ENCODE measurements at regions of chr10 and their contacts with region 1.

Region 1: DNA sequence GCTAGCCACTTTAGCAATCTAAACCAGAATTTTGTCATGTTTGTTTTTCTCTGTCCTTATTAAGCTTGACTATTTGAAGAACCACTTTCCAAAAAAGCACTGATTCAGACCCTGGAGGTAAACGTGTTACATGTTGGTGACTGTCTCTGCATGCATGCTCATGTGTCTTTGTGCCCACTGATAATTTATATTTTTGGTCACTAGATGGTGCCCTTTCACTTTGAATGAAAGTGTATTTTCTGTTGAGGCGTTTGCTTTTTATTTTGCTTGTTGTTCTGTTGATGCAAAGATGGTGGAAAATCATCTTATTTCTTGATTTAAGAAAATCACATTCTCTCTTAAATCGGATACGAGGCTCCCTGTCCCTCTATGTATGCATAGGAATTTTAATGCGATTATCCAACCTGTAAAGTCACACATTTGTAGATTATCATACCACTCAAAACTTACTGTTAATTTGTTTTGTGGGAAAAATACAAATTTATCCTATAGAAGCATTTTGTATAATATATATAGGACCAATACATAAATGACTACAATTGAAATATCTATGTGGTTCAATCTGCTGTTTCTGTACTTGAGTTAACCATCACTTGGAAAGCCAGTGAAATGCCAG is 269.3 kb downstream of the BICC1 start:
- DNase-seq: peak; percentile 49
- ATAC-seq: peak; percentile 48; the same call in 1 of the 2 replicates
- H3K4me3 ChIP-seq: no peak overlapping the region
- H3K27ac ChIP-seq: no peak overlapping the region
- H3K4me1 ChIP-seq: peaks cover 8% of the 10 kb centered on the region
- H3K27me3 ChIP-seq: no peaks in the 10 kb centered on the region
- CTCF ChIP-seq: peak; percentile 65
- POLR2A ChIP-seq: no peak
- RAD21 ChIP-seq: peak; percentile 73

Region 2: GRCh38 chr10:58851606-58852005 is 69.6 kb after region 1 on chr10:
- CTCF ChIA-PET with region 1: no interaction called
- POLR2A ChIA-PET with region 1: no interaction called
- dilution Hi-C with region 1: no loop called
- in situ Hi-C with region 1: no loop called
- intact Hi-C with region 1: no loop called
- DNase-seq: peak; percentile 19
- ATAC-seq: no peak
- H3K4me3 ChIP-seq: no peak overlapping the region
- H3K27ac ChIP-seq: no peak overlapping the region
- H3K4me1 ChIP-seq: peaks cover 2% of the 10 kb centered on the region; the same call in 1 of the 2 replicates
- H3K27me3 ChIP-seq: no peaks in the 10 kb centered on the region
- CTCF ChIP-seq: no peak
- POLR2A ChIP-seq: no peak
- RAD21 ChIP-seq: no peak

Region 3: DNA sequence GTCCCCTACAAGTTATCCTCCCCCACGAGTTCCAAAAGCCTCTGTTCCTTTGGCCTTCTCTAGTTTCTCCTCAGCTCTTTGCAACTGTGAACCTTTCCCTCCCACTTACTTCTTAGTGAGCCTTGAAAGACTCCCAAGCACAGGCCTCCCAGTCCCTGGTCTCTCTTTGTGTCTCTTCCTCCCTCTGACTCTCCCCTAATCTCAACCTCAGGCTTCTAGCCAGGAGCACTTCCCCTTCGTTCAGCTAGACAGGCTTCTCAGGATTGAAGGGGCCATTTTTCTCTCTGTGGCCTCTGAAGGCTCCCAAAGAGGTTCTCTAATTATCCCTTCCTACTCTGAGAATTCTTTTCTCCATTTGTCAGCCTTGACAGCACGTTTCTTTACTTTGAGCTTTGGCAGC is 344.3 kb after region 1 on chr10:
- CTCF ChIA-PET with region 1: no interaction called
- POLR2A ChIA-PET with region 1: no interaction called
- dilution Hi-C with region 1: no loop called
- in situ Hi-C with region 1: no loop called
- intact Hi-C with region 1: loop called (anchors 10 kb)
- DNase-seq: no peak
- ATAC-seq: no peak
- H3K4me3 ChIP-seq: no peak overlapping the region
- H3K27ac ChIP-seq: no peak overlapping the region
- H3K4me1 ChIP-seq: no peaks in the 10 kb centered on the region
- H3K27me3 ChIP-seq: no peaks in the 10 kb centered on the region; the same call in 1 of the 2 replicates
- CTCF ChIP-seq: no peak
- POLR2A ChIP-seq: no peak
- RAD21 ChIP-seq: no peak

Region 4: DNA sequence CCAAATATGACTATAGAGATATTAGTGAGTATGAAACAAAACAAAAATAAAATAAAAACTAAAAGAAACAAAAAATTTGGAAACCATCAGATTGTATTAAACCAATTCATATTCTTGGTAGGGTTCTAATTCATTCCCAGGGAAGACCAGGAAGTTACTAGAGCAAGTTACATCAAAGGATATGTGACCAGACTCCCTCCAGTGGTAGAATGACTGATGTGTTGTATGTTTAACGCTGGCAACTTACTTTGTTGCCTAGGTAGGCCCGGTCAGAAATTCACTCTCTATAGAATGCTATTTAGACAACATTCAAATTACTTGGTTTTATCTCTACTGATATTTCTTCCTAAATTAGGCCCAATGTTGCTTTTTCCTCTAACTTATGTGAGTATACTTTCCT is 399.7 kb after region 1 on chr10:
- CTCF ChIA-PET with region 1: no interaction called
- POLR2A ChIA-PET with region 1: no interaction called
- dilution Hi-C with region 1: no loop called
- in situ Hi-C with region 1: loop called (anchors 10 kb)
- intact Hi-C with region 1: loop called (anchors 1 kb)
- DNase-seq: peak; percentile 43
- ATAC-seq: peak; percentile 51; the same call in 1 of the 2 replicates
- H3K4me3 ChIP-seq: no peak overlapping the region
- H3K27ac ChIP-seq: no peak overlapping the region
- H3K4me1 ChIP-seq: no peaks in the 10 kb centered on the region
- H3K27me3 ChIP-seq: peaks cover 6% of the 10 kb centered on the region
- CTCF ChIP-seq: peak; percentile 32
- POLR2A ChIP-seq: no peak
- RAD21 ChIP-seq: peak; percentile 44

Region 5: DNA sequence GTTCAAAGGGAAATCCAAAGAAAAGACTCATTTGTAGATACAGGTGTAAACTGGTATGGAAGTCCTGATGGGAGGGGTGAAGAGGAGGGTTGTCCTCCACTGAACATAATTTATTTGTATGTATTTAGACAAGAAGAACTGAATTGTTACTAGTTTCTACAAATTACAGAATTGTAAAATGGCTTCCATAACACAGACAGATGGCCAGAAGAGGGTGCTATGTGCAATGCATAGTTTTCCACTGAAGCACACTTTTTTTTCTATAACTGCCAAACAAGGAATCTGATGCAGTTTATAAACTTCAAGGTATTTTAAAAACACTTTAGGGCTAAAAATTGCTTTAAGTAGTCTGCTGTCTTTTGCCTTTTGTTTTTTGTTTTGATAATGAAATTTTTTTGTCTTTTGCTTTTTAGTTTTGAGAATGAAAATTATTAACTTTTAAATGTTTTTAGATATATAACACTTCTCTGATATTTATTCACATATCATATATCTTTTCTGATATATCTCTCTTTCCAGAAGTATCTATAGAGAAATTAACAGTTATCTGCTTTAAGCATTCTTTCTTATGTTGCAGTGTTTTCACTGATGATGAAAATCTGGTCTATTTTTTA is 452.9 kb after region 1 on chr10:
- CTCF ChIA-PET with region 1: no interaction called
- POLR2A ChIA-PET with region 1: no interaction called
- dilution Hi-C with region 1: no loop called
- in situ Hi-C with region 1: no loop called
- intact Hi-C with region 1: loop called (anchors 1 kb)
- DNase-seq: peak; percentile 58
- ATAC-seq: peak; percentile 61; the same call in 1 of the 2 replicates
- H3K4me3 ChIP-seq: no peak overlapping the region
- H3K27ac ChIP-seq: no peak overlapping the region
- H3K4me1 ChIP-seq: no peaks in the 10 kb centered on the region
- H3K27me3 ChIP-seq: no peaks in the 10 kb centered on the region
- CTCF ChIP-seq: peak; percentile 62
- POLR2A ChIP-seq: no peak
- RAD21 ChIP-seq: peak; percentile 47

Region 6: DNA sequence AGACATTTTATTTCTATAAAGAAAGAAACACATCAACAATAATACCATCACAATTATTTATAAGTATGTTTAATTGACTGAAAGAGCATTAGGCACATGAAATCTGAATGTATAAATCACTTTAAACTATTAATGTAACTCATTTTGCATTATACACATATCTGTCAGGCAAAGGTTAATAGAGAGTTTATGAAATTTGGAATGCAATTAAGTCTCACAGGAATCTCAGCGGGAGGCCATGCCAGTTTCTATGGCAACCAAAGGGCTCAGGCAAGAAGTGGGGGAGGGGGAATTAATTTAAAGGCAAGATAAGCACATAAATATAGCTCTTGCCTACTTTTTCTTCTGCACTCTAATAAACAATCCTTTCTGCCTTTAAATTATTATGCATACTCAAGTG is 775.1 kb after region 1 on chr10:
- CTCF ChIA-PET with region 1: no interaction called
- POLR2A ChIA-PET with region 1: no interaction called
- dilution Hi-C with region 1: no loop called
- in situ Hi-C with region 1: loop called (anchors 25 kb)
- intact Hi-C with region 1: no loop called
- DNase-seq: no peak
- ATAC-seq: no peak
- H3K4me3 ChIP-seq: no peak overlapping the region
- H3K27ac ChIP-seq: no peak overlapping the region
- H3K4me1 ChIP-seq: peaks cover 3% of the 10 kb centered on the region; the same call in 1 of the 2 replicates
- H3K27me3 ChIP-seq: peaks cover 1% of the 10 kb centered on the region; the same call in 1 of the 2 replicates
- CTCF ChIP-seq: no peak
- POLR2A ChIP-seq: no peak
- RAD21 ChIP-seq: no peak